ENCODE measurements at regions of chr14 and their contacts with region 1.

Region 1: GRCh38 chr14:22986508-22987054 is 4.2 kb upstream of the AJUBA start:
- DNase-seq: peak; percentile 85
- CTCF ChIP-seq: peak; percentile 93

Region 2: GRCh38 chr14:22966783-22967269 is 19.8 kb before region 1 on chr14:
- CTCF ChIA-PET with region 1: interaction called, 270 read pairs
- POLR2A ChIA-PET with region 1: no interaction called
- DNase-seq: no peak
- CTCF ChIP-seq: no peak

Region 3: DNA sequence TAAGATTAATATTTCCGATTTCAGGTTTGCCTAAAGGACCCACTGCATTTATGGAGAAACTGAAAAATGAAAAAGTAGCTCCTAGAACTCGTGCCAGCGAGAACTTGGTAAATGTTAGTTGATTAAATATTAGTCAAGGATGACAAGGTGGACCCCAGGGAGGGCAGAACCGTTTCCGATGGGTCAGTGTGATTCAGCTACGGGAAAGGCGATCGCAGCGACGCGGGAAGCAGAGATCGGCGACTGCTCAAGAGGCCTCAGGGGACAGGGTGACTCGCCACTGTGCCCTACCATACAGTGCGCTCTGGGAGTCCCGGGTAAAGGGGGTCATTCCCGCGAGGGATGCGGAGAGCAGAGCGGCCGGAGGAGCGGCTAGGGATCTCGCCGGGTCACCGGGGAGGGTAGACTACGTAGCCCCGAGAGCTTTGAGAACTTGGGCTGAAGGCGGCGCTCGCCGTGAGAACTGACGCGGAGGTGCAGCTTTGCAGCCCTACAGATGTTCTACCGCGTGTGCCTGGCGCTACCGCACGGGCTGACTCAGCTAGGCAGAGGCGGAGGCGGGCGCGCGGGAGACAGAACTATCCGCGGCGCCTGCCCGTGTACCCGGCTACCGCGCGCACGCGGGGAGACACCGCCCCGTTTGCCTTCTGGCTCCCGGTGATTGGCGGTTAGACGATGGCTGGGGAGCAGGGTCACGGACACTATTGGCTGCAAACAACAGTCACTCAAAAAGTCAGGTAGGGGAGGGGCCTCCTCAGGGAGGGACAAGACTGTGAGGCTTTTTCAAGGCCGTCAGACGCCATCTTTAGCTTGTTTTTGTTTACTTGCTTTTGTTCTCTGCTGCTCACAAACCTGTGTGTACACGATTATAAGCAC is 20.2 kb after region 1 on chr14:
- CTCF ChIA-PET with region 1: interaction called, 218 read pairs
- POLR2A ChIA-PET with region 1: interaction called, 3 read pairs
- DNase-seq: peak; percentile 97
- CTCF ChIP-seq: no peak

Region 4: GRCh38 chr14:23034483-23035302 is 48.1 kb after region 1 on chr14 and contains the start of gene PSMB5:
- CTCF ChIA-PET with region 1: interaction called, 14 read pairs
- POLR2A ChIA-PET with region 1: no interaction called
- DNase-seq: peak; percentile 90
- CTCF ChIP-seq: no peak

Region 5: DNA sequence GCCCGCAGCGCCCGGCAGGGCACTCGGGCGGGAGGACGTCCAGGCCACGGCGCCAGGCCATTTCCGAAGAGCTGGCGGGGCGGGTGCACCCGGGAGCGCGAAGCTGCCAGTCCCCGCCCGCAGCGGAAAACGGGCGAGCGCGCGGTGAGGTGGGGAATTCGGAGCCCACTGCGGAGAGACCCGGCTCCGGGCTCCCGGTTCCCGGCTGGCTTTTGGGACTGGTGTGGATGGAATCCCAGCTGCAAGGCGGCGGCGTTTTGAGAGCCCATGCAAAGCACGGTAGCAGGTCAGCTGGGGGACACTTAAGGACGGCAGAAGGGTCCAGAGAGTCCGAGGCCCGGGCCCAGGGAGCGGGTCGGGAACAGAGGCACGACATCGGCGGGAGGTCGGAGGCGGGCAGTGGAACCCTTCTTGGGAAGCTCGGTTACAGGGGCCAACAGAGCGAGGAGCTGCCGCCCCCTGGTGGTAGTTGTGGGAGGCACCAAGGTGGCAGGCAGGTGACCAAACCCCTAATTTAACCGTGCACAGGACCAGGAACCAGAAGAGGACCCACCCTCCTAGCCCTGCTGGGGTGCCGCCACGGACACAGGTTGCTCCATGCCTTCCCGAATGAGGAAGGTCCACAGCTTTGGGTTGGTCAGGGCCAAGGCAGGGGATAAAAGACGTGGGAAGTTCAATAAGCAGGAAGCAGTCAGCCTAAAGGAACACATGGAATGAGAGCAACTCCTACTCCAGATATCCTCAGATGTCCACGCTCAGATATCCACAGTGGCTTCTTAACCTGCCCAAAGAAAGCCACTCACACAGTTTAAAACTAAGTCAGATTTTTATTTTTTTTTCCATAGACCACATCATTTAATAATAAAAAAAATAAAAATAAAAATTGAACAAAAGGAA is 71.4 kb after region 1 on chr14:
- CTCF ChIA-PET with region 1: interaction called, 834 read pairs
- POLR2A ChIA-PET with region 1: interaction called, 5 read pairs
- DNase-seq: peak; percentile 90
- CTCF ChIP-seq: peak; percentile 96

Region 6: DNA sequence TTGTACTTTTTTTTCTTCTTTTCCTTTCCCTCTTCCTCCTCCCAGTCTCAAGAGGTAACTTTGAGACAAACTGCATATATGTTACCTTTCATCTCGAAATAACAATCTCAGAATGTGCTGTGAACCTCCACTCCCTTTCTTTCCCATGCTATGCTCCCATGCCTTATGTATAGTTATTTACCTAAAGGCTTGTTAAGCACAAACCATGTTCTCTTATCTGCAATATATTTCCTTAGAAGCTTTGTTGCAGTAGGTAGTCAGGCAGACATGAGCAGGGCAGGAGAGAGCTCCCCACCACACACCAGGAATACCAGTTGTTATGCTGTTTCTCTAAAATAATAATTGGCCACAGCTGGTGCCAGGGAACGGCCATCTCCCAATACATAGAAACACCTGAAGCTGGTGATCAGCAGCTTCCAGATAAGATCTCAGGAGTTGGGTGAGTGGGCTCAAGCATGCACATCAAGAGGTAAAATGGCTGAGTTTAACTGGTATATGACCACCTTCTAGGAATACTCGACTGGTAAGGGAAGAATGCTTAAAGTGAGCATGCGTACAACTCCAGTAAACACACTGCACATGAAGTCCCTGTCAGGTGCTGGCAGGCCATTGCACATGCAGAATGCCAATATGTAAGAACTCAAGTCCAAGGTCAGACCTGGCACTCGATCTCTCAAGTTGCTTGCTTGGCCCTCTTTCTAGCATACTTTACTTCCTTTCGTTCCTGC is 634.8 kb after region 1 on chr14:
- CTCF ChIA-PET with region 1: no interaction called
- POLR2A ChIA-PET with region 1: no interaction called
- DNase-seq: no peak
- CTCF ChIP-seq: no peak